ENCODE measurements at regions of chr18 and their contacts with region 1.

Region 1: GRCh38 chr18:73842795-73843394 is 304.7 kb downstream of the FBXO15 start:
- DNase-seq: peak; percentile 14
- H3K4me3 ChIP-seq: no peak overlapping the region
- H3K27ac ChIP-seq: no peak overlapping the region
- H3K4me1 ChIP-seq: no peaks in the 10 kb centered on the region
- H3K27me3 ChIP-seq: no peaks in the 10 kb centered on the region
- CTCF ChIP-seq: peak; percentile 98 to 99

Region 2: DNA sequence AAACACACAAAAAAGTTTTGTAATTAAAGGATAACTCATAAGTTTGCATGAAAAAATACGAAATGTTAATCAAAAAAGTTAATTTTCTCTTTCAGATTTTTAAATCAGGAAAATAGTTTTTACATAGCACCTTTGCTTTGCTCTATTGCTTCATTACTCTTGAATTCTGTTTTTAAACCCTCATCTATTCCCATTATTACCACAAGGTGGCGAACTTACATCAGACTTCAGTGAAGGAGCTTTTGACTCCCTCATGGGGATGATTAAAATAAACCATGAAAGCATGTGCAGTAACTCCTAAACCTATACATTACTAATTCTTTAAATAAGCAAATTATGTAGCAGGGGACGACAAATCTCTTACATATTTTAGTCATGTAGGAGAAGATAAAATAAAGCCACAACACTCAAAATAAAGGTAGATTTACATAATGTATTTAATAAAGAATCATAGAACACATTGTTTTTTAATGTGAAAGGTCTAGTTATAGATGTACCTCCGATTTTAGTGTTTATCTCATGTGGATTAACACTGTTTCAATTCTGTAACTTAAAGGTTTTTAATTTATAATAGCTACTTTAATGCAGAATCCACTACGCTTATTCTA is 1080.3 kb before region 1 on chr18:
- CTCF ChIA-PET with region 1: no interaction called
- dilution Hi-C with region 1: no loop called
- in situ Hi-C with region 1: no loop called
- intact Hi-C with region 1: loop called (anchors 1 kb)
- DNase-seq: peak; percentile 61
- H3K4me3 ChIP-seq: no peak overlapping the region
- H3K27ac ChIP-seq: no peak overlapping the region
- H3K4me1 ChIP-seq: no peaks in the 10 kb centered on the region
- H3K27me3 ChIP-seq: no peaks in the 10 kb centered on the region
- CTCF ChIP-seq: peak; percentile 52 to 67

Region 3: GRCh38 chr18:73136134-73136533 is 706.8 kb before region 1 on chr18:
- CTCF ChIA-PET with region 1: no interaction called
- dilution Hi-C with region 1: no loop called
- in situ Hi-C with region 1: no loop called
- intact Hi-C with region 1: loop called (anchors 5 kb)
- DNase-seq: peak; percentile 11
- H3K4me3 ChIP-seq: no peak overlapping the region
- H3K27ac ChIP-seq: no peak overlapping the region
- H3K4me1 ChIP-seq: no peaks in the 10 kb centered on the region
- H3K27me3 ChIP-seq: no peaks in the 10 kb centered on the region
- CTCF ChIP-seq: peak; percentile 45 to 64

Region 4: GRCh38 chr18:73487966-73488365 is 354.9 kb before region 1 on chr18:
- CTCF ChIA-PET with region 1: no interaction called
- dilution Hi-C with region 1: no loop called
- in situ Hi-C with region 1: no loop called
- intact Hi-C with region 1: loop called (anchors 10 kb)
- DNase-seq: peak; percentile 13
- H3K4me3 ChIP-seq: no peak overlapping the region
- H3K27ac ChIP-seq: no peak overlapping the region
- H3K4me1 ChIP-seq: no peaks in the 10 kb centered on the region
- H3K27me3 ChIP-seq: no peaks in the 10 kb centered on the region
- CTCF ChIP-seq: no peak

Region 5: DNA sequence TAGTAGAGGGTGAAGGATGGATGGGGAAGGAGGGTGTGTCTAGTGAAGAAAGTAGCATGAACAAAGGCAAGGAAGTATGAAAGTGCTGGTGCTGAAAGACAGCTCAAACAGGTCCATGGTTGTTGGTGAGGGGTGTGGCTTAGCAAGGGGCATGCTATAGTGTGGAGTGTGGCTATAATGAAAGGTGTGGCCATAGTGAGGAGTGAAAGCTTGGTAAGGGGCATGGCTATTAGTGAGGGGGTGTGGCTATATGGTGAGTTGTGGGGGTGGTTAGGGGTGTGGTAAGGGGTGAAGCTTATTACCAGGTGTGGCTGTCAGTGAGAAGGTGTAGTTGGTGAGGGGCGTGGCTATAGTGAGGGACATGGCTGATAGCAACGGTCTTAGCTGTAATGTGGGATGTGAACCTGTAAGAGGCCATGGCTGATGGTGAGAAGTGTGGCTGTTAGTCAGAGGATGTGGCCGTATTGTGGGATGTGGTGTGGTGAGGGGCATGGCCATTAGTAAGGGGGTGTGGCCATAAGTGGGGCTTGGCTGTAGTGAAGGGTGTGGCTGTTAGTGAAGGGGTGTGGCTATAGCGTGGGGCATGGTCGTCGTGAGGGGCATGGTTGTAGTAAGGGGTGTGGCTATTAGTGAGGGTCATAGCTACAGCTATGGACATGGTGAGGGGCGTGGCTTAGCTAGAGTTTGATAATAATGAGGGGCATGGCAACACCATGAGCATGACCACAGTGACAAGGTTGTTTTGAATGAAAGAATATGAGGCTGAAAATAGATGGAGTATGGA is 244.9 kb before region 1 on chr18:
- CTCF ChIA-PET with region 1: no interaction called
- dilution Hi-C with region 1: no loop called
- in situ Hi-C with region 1: no loop called
- intact Hi-C with region 1: loop called (anchors 10 kb)
- DNase-seq: peak; percentile 20
- H3K4me3 ChIP-seq: no peak overlapping the region
- H3K27ac ChIP-seq: no peak overlapping the region
- H3K4me1 ChIP-seq: no peaks in the 10 kb centered on the region
- H3K27me3 ChIP-seq: no peaks in the 10 kb centered on the region
- CTCF ChIP-seq: no peak

Region 6: DNA sequence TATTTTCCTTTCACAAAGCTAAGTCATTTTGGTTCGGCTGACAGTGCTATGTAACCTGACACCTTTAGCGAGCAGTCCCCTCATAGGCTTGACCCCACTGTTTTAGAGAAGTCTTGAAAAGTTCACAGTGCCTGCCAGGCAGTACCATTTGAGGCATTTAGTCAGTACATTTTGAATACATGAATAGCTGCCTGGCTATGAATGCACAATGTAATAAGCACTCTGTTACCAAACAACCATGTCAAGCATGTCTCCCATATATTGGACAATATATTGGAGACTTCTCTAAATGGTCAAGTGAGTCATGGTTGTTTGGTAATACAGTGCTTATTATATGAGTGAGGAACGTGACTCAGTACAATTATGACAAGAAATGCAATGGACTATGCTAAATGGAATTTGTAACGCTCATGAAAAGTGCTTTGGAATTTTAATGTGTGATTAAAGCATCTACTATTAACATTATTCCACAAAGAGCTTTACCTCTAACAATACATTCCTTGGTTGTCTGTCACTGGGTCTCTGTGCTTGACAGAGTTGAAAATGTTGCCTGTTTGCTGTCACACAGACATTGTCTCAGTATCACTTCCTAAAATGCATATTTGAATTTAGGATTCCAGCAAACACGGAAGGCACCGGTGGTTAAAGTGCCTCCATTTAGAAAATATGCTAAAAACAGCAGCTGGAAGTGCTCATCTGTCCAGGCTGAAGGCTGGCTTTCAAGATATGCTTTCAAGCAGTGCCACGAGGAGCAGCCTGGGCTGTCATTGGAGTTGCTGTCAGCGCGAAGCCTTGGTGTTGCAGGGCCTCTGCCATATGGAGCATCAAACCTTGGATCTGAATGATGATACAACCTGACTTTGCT is 153.8 kb before region 1 on chr18:
- CTCF ChIA-PET with region 1: no interaction called
- dilution Hi-C with region 1: no loop called
- in situ Hi-C with region 1: no loop called
- intact Hi-C with region 1: loop called (anchors 10 kb)
- DNase-seq: peak; percentile 85
- H3K4me3 ChIP-seq: no peak overlapping the region
- H3K27ac ChIP-seq: peak overlapping the region; percentile 18
- H3K4me1 ChIP-seq: peaks cover 23% of the 10 kb centered on the region
- H3K27me3 ChIP-seq: no peaks in the 10 kb centered on the region
- CTCF ChIP-seq: no peak

Region 7: GRCh38 chr18:74342416-74343043 is 499.6 kb after region 1 on chr18:
- CTCF ChIA-PET with region 1: no interaction called
- dilution Hi-C with region 1: no loop called
- in situ Hi-C with region 1: no loop called
- intact Hi-C with region 1: loop called (anchors 5 kb)
- DNase-seq: peak; percentile 26
- H3K4me3 ChIP-seq: no peak overlapping the region
- H3K27ac ChIP-seq: no peak overlapping the region
- H3K4me1 ChIP-seq: no peaks in the 10 kb centered on the region
- H3K27me3 ChIP-seq: no peaks in the 10 kb centered on the region
- CTCF ChIP-seq: peak; percentile 43 to 61